ENCODE measurements at regions of chr16 and their contacts with region 1.

Region 1: DNA sequence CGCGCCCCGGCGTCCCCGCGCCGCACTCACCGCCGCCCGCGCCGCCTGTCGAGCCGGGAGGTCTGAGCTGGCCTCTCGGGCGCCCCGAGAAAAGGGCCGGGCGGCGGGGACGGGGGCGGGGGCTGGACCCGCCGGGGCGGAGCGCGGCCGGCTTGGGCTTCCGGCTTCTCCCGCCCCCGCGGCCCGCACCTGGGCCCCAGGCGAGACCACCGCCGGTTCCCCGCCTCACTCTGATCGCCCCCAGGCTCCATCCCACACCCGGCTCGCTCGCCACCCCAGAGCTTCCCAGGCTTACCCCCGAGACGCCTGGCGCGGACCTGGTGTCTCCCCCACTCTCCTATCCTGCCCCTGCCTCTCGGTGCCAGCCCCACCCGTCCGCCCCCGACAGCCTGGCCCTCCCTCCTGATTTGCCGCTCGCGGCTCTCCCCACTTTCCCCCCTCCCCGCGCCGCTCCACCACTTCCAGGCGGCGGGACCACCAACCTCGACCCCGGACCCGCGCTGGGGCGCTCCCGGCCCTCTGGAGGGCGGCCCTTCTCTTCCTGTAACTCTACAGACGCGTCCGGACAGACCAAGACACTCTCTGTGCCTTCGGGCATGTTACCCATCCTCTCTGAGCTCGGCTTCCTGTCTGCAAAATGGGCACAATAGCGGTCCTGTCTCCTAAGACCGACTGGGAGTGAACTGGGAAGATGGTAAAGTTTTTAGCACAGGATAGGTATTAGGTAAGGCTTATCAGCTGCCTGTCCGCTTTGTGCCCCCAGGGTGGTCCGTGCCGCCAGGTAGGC is at the start of gene LITAF:
- DNase-seq: peak in 34 of 35 experiments; percentile 30 to 68 (median 52)
- ATAC-seq: peak; percentile 65 to 73 (median 68)
- H3K4me3 ChIP-seq: peak within 1 kb of the TSS; percentile 84 to 89
- H3K4me3 Mint-ChIP-seq: peak within 1 kb of the TSS; percentile 91 to 96 (median 93)
- H3K27ac ChIP-seq: peak within 1 kb of the TSS; percentile 86
- H3K27ac Mint-ChIP-seq: peak within 1 kb of the TSS; percentile 95 to 97
- H3K4me1 ChIP-seq: peaks cover 29 to 38% of the 10 kb centered on the region in 2 experiments
- H3K4me1 Mint-ChIP-seq: peaks cover 37 to 46% (median 45%) of the 10 kb centered on the region in 3 donors
- H3K27me3 ChIP-seq: no peaks in the 10 kb centered on the region
- H3K27me3 Mint-ChIP-seq: no peaks in the 10 kb centered on the region
- total RNA-seq, gene LITAF: 150 to 256 (median 161) TPM

Region 2: GRCh38 chr16:11498683-11499082 is 88.4 kb before region 1 on chr16:
- CTCF ChIA-PET with region 1: interaction called in 1 of 2 experiments, 3 read pairs
- POLR2A ChIA-PET with region 1: interaction called in 1 of 2 experiments, 10 read pairs
- DNase-seq: no peak
- ATAC-seq: no peak
- H3K4me3 ChIP-seq: no peak overlapping the region
- H3K4me3 Mint-ChIP-seq: no peak overlapping the region
- H3K27ac ChIP-seq: no peak overlapping the region
- H3K27ac Mint-ChIP-seq: no peak overlapping the region
- H3K4me1 ChIP-seq: peaks cover 16 to 22% of the 10 kb centered on the region in 2 experiments
- H3K4me1 Mint-ChIP-seq: peaks cover 27 to 36% (median 33%) of the 10 kb centered on the region in 3 donors
- H3K27me3 ChIP-seq: peaks cover 0 to 2% of the 10 kb centered on the region in 2 experiments
- H3K27me3 Mint-ChIP-seq: no peaks in the 10 kb centered on the region

Region 3: GRCh38 chr16:11560701-11561449 is 26.2 kb before region 1 on chr16:
- CTCF ChIA-PET with region 1: interaction called, 3 to 10 read pairs
- POLR2A ChIA-PET with region 1: interaction called, 3 to 15 read pairs
- DNase-seq: peak; percentile 45 to 94 (median 82)
- ATAC-seq: peak; percentile 91 to 96 (median 93)
- H3K4me3 ChIP-seq: peak overlapping the region; percentile 48 to 64
- H3K4me3 Mint-ChIP-seq: peak overlapping the region; percentile 73 to 83 (median 79)
- H3K27ac ChIP-seq: peak overlapping the region; percentile 95
- H3K27ac Mint-ChIP-seq: peak overlapping the region; percentile 87 to 90
- H3K4me1 ChIP-seq: peaks cover 31 to 97% of the 10 kb centered on the region in 2 experiments
- H3K4me1 Mint-ChIP-seq: peaks cover 85 to 92% (median 87%) of the 10 kb centered on the region in 3 donors
- H3K27me3 ChIP-seq: no peaks in the 10 kb centered on the region
- H3K27me3 Mint-ChIP-seq: no peaks in the 10 kb centered on the region

Region 4: GRCh38 chr16:11629071-11629962 is 42.3 kb after region 1 on chr16:
- CTCF ChIA-PET with region 1: no interaction called
- POLR2A ChIA-PET with region 1: no interaction called
- DNase-seq: peak in 1 of 35 experiments; percentile 33
- ATAC-seq: peak; percentile 7 to 77 (median 22)
- H3K4me3 ChIP-seq: no peak overlapping the region
- H3K4me3 Mint-ChIP-seq: peak overlapping the region in 1 of 3 donors; percentile 47
- H3K27ac ChIP-seq: peak overlapping the region; percentile 12
- H3K27ac Mint-ChIP-seq: peak overlapping the region; percentile 27 to 81
- H3K4me1 ChIP-seq: peaks cover 17 to 40% of the 10 kb centered on the region in 2 experiments
- H3K4me1 Mint-ChIP-seq: peaks cover 50 to 55% (median 50%) of the 10 kb centered on the region in 3 donors
- H3K27me3 ChIP-seq: peaks cover 0 to 2% of the 10 kb centered on the region in 2 experiments
- H3K27me3 Mint-ChIP-seq: no peaks in the 10 kb centered on the region